A549 (cell line): ENCODE measurements at regions of chr15 and their contacts with region 1.

Region 1: GRCh38 chr15:63466378-63467192 is 37.8 kb upstream of the USP3 start:
- DNase-seq: peak; percentile 88 to 91
- ATAC-seq: peak; percentile 82 to 89
- H3K4me3 ChIP-seq: no peak overlapping the region
- H3K27ac ChIP-seq: peak overlapping the region; percentile 46 to 70
- H3K4me1 ChIP-seq: peaks cover 47% of the 10 kb centered on the region
- CTCF ChIP-seq: peak; percentile 95
- EP300 ChIP-seq: no peak
- POLR2A ChIP-seq: no peak
- RAD21 ChIP-seq: peak; percentile 96 to 97

Region 2: GRCh38 chr15:63448266-63448665 is 18.3 kb before region 1 on chr15:
- CTCF ChIA-PET with region 1: interaction called, 44 read pairs
- POLR2A ChIA-PET with region 1: no interaction called
- DNase-seq: no peak
- ATAC-seq: no peak
- H3K4me3 ChIP-seq: no peak overlapping the region
- H3K27ac ChIP-seq: peak overlapping the region; percentile 67 to 93
- H3K4me1 ChIP-seq: peaks cover 37% of the 10 kb centered on the region
- CTCF ChIP-seq: no peak
- EP300 ChIP-seq: no peak
- POLR2A ChIP-seq: no peak
- RAD21 ChIP-seq: no peak

Region 3: GRCh38 chr15:63487076-63487757 is 20.6 kb after region 1 on chr15:
- CTCF ChIA-PET with region 1: interaction called, 53 read pairs
- POLR2A ChIA-PET with region 1: no interaction called
- DNase-seq: peak; percentile 90 to 96
- ATAC-seq: peak; percentile 90 to 91
- H3K4me3 ChIP-seq: no peak overlapping the region
- H3K27ac ChIP-seq: peak overlapping the region; percentile 60 to 74
- H3K4me1 ChIP-seq: peaks cover 59% of the 10 kb centered on the region
- CTCF ChIP-seq: peak; percentile 95
- EP300 ChIP-seq: no peak
- POLR2A ChIP-seq: no peak
- RAD21 ChIP-seq: peak; percentile 91 to 92

Region 4: GRCh38 chr15:63514531-63514943 is 48.0 kb after region 1 on chr15:
- CTCF ChIA-PET with region 1: interaction called, 19 read pairs
- POLR2A ChIA-PET with region 1: no interaction called
- DNase-seq: peak; percentile 57 to 86
- ATAC-seq: peak; percentile 60 to 87
- H3K4me3 ChIP-seq: peak overlapping the region; percentile 30
- H3K27ac ChIP-seq: peak overlapping the region; percentile 77 to 78
- H3K4me1 ChIP-seq: peaks cover 94% of the 10 kb centered on the region
- CTCF ChIP-seq: no peak
- EP300 ChIP-seq: peak; percentile 86 to 89; a peak in 3 of 5 replicates
- POLR2A ChIP-seq: no peak
- RAD21 ChIP-seq: 0 out of 5 replicates have a peak, but pooled peaks of 1 of the 2 experiments have one; percentile 22

Region 5: GRCh38 chr15:63553388-63553791 is 86.8 kb after region 1 on chr15:
- CTCF ChIA-PET with region 1: interaction called, 14 read pairs
- POLR2A ChIA-PET with region 1: no interaction called
- DNase-seq: no peak
- ATAC-seq: peak in 1 of 2 experiments; percentile 36; a peak in 2 of 6 replicates
- H3K4me3 ChIP-seq: no peak overlapping the region
- H3K27ac ChIP-seq: no peak overlapping the region
- H3K4me1 ChIP-seq: peaks cover 34% of the 10 kb centered on the region
- CTCF ChIP-seq: no peak
- EP300 ChIP-seq: no peak
- POLR2A ChIP-seq: no peak
- RAD21 ChIP-seq: no peak

Region 6: GRCh38 chr15:63600616-63601025 is 134.0 kb after region 1 on chr15:
- CTCF ChIA-PET with region 1: interaction called, 185 read pairs
- POLR2A ChIA-PET with region 1: interaction called, 5 read pairs
- DNase-seq: peak; percentile 94 to 96
- ATAC-seq: peak; percentile 70 to 79
- H3K4me3 ChIP-seq: peak overlapping the region; percentile 83
- H3K27ac ChIP-seq: peak overlapping the region; percentile 91 to 93
- H3K4me1 ChIP-seq: peaks cover 20% of the 10 kb centered on the region; the same call in 2 of the 3 replicates
- CTCF ChIP-seq: peak; percentile 46; the same call in 1 of the 3 replicates
- EP300 ChIP-seq: no peak
- POLR2A ChIP-seq: peak; percentile 97
- RAD21 ChIP-seq: no peak; a peak in 1 of 5 replicates